ENCODE measurements at regions of chr3 and their contacts with region 1.

Region 1: DNA sequence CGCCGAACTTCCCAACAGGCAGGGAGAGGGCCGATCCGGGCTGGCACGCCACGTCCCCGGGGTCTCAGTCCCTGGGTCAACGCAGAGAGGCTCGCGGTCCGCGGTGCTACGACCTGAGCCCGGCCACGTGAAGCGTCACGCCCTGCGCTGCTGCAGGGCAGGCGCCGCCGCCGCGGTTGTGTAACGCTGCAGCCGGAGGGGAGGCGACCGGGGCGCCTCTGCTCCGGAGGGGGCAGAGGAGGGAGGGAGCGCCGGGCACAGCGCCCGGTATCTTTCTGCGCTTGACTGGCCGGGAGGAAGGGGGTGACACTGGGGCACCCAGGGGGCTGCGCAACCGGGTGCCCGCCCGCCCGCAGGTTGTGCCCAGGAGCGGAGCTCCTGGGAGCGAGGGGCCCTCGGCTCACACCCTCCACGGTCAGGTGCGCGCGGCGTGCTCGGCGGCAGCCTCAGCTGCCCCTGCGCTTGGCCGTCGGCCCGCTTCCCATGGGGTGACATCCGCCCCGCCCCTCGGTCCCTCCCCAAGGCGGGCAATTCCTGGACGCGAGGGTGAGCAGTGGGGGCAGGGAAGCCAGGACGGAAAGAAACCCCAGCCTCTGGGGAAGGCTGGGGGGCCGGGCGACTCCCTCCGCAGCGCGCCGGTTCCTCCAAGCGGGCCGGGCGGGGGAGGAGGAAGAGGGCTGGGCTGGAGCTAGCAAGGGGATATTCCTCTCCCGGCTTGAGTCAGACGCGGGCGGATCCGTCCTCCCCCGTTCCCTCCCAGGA is 852 bp upstream of the BHLHE40 start:
- DNase-seq: peak; percentile 92
- H3K4me3 Mint-ChIP-seq: peak overlapping the region; percentile 94
- H3K27ac Mint-ChIP-seq: peak overlapping the region; percentile 99
- H3K4me1 Mint-ChIP-seq: peaks cover 42% of the 10 kb centered on the region
- H3K27me3 Mint-ChIP-seq: no peaks in the 10 kb centered on the region

Region 2: DNA sequence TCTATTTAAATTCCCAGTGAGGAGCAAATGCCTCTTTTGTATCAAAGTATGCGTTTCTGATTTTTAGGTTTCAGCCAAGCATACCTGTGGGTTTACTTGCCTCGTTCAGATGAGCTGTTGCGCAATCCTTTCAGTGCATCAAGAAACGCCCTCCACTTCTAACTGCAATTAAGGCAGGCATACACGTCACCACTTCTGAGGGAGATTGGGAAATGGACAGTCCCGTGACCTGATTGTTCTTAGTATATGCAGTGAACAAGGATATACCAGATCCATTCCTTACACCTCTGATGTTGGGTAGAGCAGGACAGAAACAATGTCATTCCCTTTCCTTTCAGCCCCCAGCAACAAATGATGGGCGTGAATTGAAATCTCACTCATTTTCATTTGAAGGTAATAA is 266.2 kb before region 1 on chr3:
- CTCF ChIA-PET with region 1: interaction called, 119 read pairs
- POLR2A ChIA-PET with region 1: interaction called, 30 read pairs
- DNase-seq: no peak
- H3K4me3 Mint-ChIP-seq: no peak overlapping the region
- H3K27ac Mint-ChIP-seq: no peak overlapping the region
- H3K4me1 Mint-ChIP-seq: peaks cover 22% of the 10 kb centered on the region
- H3K27me3 Mint-ChIP-seq: no peaks in the 10 kb centered on the region

Region 3: DNA sequence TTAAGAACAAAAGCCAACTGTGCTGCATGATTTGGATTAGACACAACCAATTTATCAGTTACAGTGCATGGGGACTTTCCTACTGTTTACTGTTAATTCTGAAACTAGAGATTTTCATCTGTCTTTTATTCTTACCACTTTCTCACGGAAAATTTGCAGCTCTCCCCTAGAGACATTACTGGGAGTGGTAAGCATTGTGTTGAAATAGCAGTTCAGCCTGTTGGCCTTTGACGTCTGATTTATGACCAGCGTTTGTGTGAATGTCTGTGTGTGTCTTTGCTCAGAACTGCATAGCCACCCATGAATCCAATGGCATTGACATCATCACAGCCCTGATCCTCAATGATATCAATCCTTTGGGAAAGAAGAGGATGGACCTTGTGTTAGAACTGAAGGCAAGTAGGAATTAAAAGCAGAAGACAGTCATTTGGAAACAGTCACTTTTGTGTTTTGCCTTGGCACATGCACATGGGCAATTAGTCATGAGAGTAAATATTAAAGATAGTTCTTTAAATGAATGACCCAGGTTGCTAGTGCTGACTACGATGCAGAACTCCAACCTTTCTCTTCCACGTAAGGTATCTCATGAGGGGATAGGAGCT is 201.3 kb before region 1 on chr3:
- CTCF ChIA-PET with region 1: interaction called, 4 read pairs
- POLR2A ChIA-PET with region 1: interaction called, 21 read pairs
- DNase-seq: peak; percentile 22
- H3K4me3 Mint-ChIP-seq: no peak overlapping the region
- H3K27ac Mint-ChIP-seq: peak overlapping the region; percentile 83
- H3K4me1 Mint-ChIP-seq: peaks cover 77% of the 10 kb centered on the region
- H3K27me3 Mint-ChIP-seq: no peaks in the 10 kb centered on the region

Region 4: GRCh38 chr3:4850211-4850927 is 128.0 kb before region 1 on chr3:
- CTCF ChIA-PET with region 1: interaction called, 20 read pairs
- POLR2A ChIA-PET with region 1: interaction called, 822 read pairs
- DNase-seq: peak; percentile 69
- H3K4me3 Mint-ChIP-seq: peak overlapping the region; percentile 38
- H3K27ac Mint-ChIP-seq: peak overlapping the region; percentile 94
- H3K4me1 Mint-ChIP-seq: peaks cover 90% of the 10 kb centered on the region
- H3K27me3 Mint-ChIP-seq: no peaks in the 10 kb centered on the region

Region 5: GRCh38 chr3:4928277-4928789 is 50.1 kb before region 1 on chr3:
- CTCF ChIA-PET with region 1: interaction called, 16 read pairs
- POLR2A ChIA-PET with region 1: interaction called, 28 read pairs
- DNase-seq: peak; percentile 33
- H3K4me3 Mint-ChIP-seq: no peak overlapping the region
- H3K27ac Mint-ChIP-seq: peak overlapping the region; percentile 53
- H3K4me1 Mint-ChIP-seq: peaks cover 34% of the 10 kb centered on the region
- H3K27me3 Mint-ChIP-seq: no peaks in the 10 kb centered on the region

Region 6: DNA sequence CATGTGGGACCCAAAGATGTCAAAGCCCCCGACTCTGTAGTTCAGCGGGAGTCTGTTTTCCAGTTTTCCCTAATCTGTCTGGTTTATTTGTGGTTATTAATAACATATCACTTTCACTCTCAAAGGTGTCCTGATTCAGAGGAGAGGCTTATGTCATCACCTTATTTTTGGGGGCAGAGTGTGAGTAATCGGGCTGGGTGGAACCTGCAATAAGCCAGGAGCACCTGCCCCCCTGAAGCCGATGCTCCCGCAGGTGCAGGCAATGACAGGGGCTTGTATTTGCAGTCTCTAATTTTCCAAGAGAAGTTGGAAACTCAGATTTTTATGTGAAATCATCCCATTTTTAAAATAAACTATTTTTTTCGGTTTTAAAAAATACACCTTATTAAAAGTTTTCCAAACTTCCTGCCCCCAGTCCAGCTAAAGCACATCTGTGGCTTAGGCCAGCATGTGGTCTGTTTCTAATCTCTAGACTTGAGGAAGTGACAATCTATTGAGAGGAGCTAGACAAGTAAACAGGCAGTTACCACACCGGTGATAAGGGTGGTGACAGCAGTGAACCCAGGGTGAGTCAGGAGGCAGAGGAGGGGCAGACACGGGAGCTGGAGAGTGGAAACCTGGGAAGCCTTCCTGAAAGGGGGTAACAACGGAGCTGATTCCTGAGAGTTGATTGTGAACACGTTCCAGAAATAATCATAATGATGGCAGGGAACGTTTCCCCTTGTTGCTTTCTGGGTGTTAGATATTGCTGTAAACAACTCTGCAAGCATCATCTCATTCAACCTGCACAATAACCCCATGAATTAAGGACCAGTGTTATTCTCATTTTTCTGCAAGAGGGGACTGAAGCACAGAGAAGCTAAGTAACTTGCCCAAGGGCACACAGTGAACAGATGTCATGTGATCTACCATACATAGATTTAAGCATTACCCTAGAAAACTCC is 38.1 kb after region 1 on chr3:
- CTCF ChIA-PET with region 1: interaction called, 59 read pairs
- POLR2A ChIA-PET with region 1: interaction called, 588 read pairs
- DNase-seq: peak; percentile 73
- H3K4me3 Mint-ChIP-seq: no peak overlapping the region
- H3K27ac Mint-ChIP-seq: peak overlapping the region; percentile 87
- H3K4me1 Mint-ChIP-seq: peaks cover 95% of the 10 kb centered on the region
- H3K27me3 Mint-ChIP-seq: no peaks in the 10 kb centered on the region

Region 7: DNA sequence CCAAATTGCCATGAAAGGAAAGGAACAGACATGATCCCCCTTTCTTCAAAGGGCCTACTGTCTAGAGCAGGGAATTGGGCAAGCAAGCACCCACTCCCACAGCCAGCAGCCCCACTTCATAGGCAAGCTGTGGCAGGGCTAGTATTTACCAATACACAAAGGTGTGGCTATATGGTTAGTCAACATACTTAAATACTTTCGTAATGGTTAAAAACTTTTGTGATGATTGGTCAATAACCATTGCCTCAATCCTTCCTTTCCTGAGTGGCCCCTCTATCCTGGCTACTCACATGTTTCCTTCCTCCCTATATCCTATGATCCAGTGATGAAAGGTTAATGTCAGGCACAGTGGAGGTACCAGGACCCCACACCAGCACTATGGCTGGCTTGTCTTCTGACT is 113.6 kb after region 1 on chr3:
- CTCF ChIA-PET with region 1: no interaction called
- POLR2A ChIA-PET with region 1: no interaction called
- DNase-seq: no peak
- H3K4me3 Mint-ChIP-seq: no peak overlapping the region
- H3K27ac Mint-ChIP-seq: no peak overlapping the region
- H3K4me1 Mint-ChIP-seq: peaks cover 2% of the 10 kb centered on the region
- H3K27me3 Mint-ChIP-seq: peaks cover 25% of the 10 kb centered on the region

Region 8: DNA sequence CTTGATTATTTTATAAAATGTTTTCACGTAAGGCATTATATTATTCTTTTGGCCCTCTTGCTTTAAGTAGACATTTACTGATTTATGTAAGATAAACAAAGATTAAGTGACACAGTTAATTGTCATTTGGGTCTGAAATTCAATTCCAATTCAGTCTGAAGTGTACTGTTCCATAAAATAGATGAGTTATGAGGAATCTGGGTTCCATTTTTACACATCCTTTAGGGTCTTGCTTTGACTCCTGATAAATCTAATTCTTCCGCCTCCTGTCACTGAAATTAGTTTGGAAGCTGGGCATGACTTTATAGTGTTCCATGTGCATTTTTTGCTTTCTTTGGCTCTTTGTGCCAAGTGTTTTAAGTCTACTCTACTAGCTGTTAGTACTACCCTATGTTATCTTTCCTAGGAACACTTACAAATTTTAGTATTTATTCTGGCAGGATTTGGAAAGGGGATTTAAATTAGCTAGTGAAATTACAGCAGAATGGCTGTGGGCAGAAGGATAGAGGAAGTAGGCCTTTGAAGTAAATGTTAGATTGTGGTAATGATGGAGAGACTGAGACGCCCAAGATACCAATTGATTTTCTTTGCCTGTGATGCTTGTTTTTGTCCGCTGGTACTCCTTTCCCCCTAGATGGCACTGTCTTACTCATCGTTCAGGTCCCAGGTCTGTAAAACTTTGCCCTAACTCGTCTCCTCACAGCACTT is 158.0 kb after region 1 on chr3:
- CTCF ChIA-PET with region 1: no interaction called
- POLR2A ChIA-PET with region 1: no interaction called
- DNase-seq: peak; percentile 29
- H3K4me3 Mint-ChIP-seq: no peak overlapping the region
- H3K27ac Mint-ChIP-seq: peak overlapping the region; percentile 0
- H3K4me1 Mint-ChIP-seq: peaks cover 38% of the 10 kb centered on the region
- H3K27me3 Mint-ChIP-seq: no peaks in the 10 kb centered on the region

Region 9: GRCh38 chr3:5187156-5187919 is 209.0 kb after region 1 on chr3 and contains the start of gene EDEM1:
- CTCF ChIA-PET with region 1: no interaction called
- POLR2A ChIA-PET with region 1: interaction called, 47 read pairs
- DNase-seq: peak; percentile 97
- H3K4me3 Mint-ChIP-seq: peak within 1 kb of the TSS; percentile 98
- H3K27ac Mint-ChIP-seq: peak within 1 kb of the TSS; percentile 96
- H3K4me1 Mint-ChIP-seq: peaks cover 32% of the 10 kb centered on the region
- H3K27me3 Mint-ChIP-seq: no peaks in the 10 kb centered on the region
- total RNA-seq, gene EDEM1: 148 to 150 TPM